Mammary epithelial cell (primary cell): ENCODE measurements at regions of chr2 and their contacts with region 1.

Region 1: DNA sequence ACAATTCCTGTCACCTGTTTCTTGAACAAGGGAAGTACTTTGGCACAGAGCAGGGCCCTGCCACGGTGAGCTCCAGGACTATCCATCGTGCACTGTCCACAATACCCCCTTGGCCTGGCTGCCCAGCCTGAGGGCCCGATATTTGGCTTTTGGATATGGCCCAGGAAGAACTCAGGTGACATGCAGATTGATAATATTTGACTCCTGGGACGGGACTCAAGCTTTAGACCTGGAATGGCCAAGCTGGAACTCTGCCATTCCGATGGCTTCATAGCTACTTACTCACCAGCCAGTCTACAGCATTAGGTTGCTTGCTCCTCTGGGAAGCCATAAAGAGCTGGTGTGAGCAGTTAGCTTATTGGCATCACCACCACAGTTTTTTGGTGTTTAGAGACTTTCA is 26.6 kb downstream of the EML6 start:
- DNase-seq: no peak
- H3K4me3 ChIP-seq: no peak overlapping the region
- H3K27ac ChIP-seq: no peak overlapping the region
- H3K4me1 ChIP-seq: no peaks in the 10 kb centered on the region
- H3K27me3 ChIP-seq: no peaks in the 10 kb centered on the region
- CTCF ChIP-seq: no peak

Region 2: DNA sequence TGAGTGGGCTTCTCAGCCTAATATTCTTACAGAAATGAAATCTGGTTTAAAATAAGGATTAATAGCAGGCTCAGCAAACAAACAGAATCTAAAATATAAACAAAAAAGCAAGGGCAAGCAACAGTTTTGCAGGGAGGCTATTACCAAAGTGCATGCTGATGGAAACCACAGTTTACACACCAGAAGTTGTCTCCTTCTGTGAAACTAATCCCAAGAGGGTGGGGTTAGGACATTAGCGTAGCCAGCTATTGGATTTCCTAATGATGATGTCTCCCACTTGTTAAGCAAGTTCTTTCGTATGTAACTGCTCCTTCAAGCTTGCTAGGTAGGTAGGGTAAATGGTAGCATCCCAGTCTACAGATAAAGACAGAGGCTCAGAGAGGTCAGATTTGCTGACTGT is 429.0 kb before region 1 on chr2:
- CTCF ChIA-PET with region 1: no interaction called
- dilution Hi-C with region 1: no loop called
- in situ Hi-C with region 1: no loop called
- intact Hi-C with region 1: no loop called
- DNase-seq: no peak
- H3K4me3 ChIP-seq: no peak overlapping the region
- H3K27ac ChIP-seq: no peak overlapping the region
- H3K4me1 ChIP-seq: no peaks in the 10 kb centered on the region
- H3K27me3 ChIP-seq: no peaks in the 10 kb centered on the region
- CTCF ChIP-seq: no peak

Region 3: GRCh38 chr2:54642677-54643430 is 107.2 kb before region 1 on chr2:
- CTCF ChIA-PET with region 1: no interaction called
- dilution Hi-C with region 1: no loop called
- in situ Hi-C with region 1: no loop called
- intact Hi-C with region 1: no loop called
- DNase-seq: no peak
- H3K4me3 ChIP-seq: no peak overlapping the region
- H3K27ac ChIP-seq: no peak overlapping the region
- H3K4me1 ChIP-seq: peaks cover 12% of the 10 kb centered on the region
- H3K27me3 ChIP-seq: no peaks in the 10 kb centered on the region
- CTCF ChIP-seq: no peak

Region 4: GRCh38 chr2:54657664-54658083 is 92.4 kb before region 1 on chr2:
- CTCF ChIA-PET with region 1: no interaction called
- dilution Hi-C with region 1: loop called (anchors 5 kb)
- in situ Hi-C with region 1: no loop called
- intact Hi-C with region 1: no loop called
- DNase-seq: no peak
- H3K4me3 ChIP-seq: no peak overlapping the region
- H3K27ac ChIP-seq: no peak overlapping the region
- H3K4me1 ChIP-seq: no peaks in the 10 kb centered on the region
- H3K27me3 ChIP-seq: no peaks in the 10 kb centered on the region
- CTCF ChIP-seq: peak; percentile 44 to 63

Region 5: GRCh38 chr2:55364189-55365055 is 614.4 kb after region 1 on chr2:
- CTCF ChIA-PET with region 1: no interaction called
- dilution Hi-C with region 1: no loop called
- in situ Hi-C with region 1: no loop called
- intact Hi-C with region 1: no loop called
- DNase-seq: peak; percentile 92
- H3K4me3 ChIP-seq: peak overlapping the region in 1 of 3 experiments; percentile 12
- H3K27ac ChIP-seq: peak overlapping the region; percentile 3
- H3K4me1 ChIP-seq: peaks cover 9% of the 10 kb centered on the region
- H3K27me3 ChIP-seq: no peaks in the 10 kb centered on the region
- CTCF ChIP-seq: no peak

Region 6: GRCh38 chr2:55628931-55629330 is 878.9 kb after region 1 on chr2:
- CTCF ChIA-PET with region 1: no interaction called
- dilution Hi-C with region 1: no loop called
- in situ Hi-C with region 1: no loop called
- intact Hi-C with region 1: no loop called
- DNase-seq: peak; percentile 10
- H3K4me3 ChIP-seq: no peak overlapping the region
- H3K27ac ChIP-seq: no peak overlapping the region
- H3K4me1 ChIP-seq: peaks cover 9% of the 10 kb centered on the region
- H3K27me3 ChIP-seq: no peaks in the 10 kb centered on the region
- CTCF ChIP-seq: no peak